ENCODE measurements at regions of chr13 and their contacts with region 1.

Region 1: GRCh38 chr13:78586706-78587105 is 16.6 kb downstream of the POU4F1 start:
- DNase-seq: peak; percentile 81
- ATAC-seq: peak; percentile 98
- H3K4me3 Mint-ChIP-seq: peak overlapping the region; percentile 74
- H3K27ac Mint-ChIP-seq: no peak overlapping the region
- H3K4me1 Mint-ChIP-seq: peaks cover 9% of the 10 kb centered on the region
- H3K27me3 Mint-ChIP-seq: peaks cover 63% of the 10 kb centered on the region
- CTCF ChIP-seq: peak; percentile 78

Region 2: GRCh38 chr13:78121459-78122348 is 465.0 kb before region 1 on chr13:
- CTCF ChIA-PET with region 1: no interaction called
- POLR2A ChIA-PET with region 1: no interaction called
- DNase-seq: peak; percentile 27
- ATAC-seq: peak; percentile 68
- H3K4me3 Mint-ChIP-seq: no peak overlapping the region
- H3K27ac Mint-ChIP-seq: no peak overlapping the region
- H3K4me1 Mint-ChIP-seq: peaks cover 41% of the 10 kb centered on the region
- H3K27me3 Mint-ChIP-seq: no peaks in the 10 kb centered on the region
- CTCF ChIP-seq: peak; percentile 79

Region 3: DNA sequence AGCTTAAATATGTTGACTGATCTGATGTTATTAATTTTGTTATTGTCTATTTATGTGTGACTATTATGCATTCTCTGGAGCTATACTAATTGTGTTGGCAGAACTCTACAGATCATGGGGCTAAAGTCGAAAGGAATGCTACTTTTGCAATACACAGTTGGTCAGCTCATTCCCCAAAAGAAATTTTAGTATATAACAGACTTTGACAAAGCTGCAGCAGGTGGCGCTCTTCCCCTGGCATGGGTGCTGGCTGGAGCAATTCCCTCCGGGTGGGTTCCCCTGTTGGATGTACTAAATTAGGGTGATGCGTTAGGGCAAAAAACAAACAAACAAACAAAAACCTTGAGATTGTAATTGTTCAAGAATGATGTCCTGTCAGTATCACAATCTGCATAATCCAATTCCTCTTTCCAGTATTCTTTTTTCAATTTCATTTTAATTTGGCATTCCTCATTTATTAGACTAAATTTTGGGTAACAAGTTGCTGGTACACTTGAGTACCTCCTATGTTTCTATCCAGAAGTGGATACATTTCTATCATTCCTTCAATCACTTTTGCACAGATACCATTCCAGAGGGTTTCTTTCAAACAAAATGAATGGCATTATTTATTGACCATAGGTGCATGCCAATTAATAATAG is 345.3 kb before region 1 on chr13:
- CTCF ChIA-PET with region 1: interaction called, 40 read pairs
- POLR2A ChIA-PET with region 1: no interaction called
- DNase-seq: peak; percentile 73
- ATAC-seq: peak; percentile 86
- H3K4me3 Mint-ChIP-seq: no peak overlapping the region
- H3K27ac Mint-ChIP-seq: no peak overlapping the region
- H3K4me1 Mint-ChIP-seq: peaks cover 16% of the 10 kb centered on the region
- H3K27me3 Mint-ChIP-seq: no peaks in the 10 kb centered on the region; the same call in 1 of the 2 replicates
- CTCF ChIP-seq: peak; percentile 78

Region 4: GRCh38 chr13:78468621-78469020 is 118.1 kb before region 1 on chr13:
- CTCF ChIA-PET with region 1: interaction called, 11 read pairs
- POLR2A ChIA-PET with region 1: no interaction called
- DNase-seq: no peak
- ATAC-seq: no peak
- H3K4me3 Mint-ChIP-seq: no peak overlapping the region
- H3K27ac Mint-ChIP-seq: no peak overlapping the region
- H3K4me1 Mint-ChIP-seq: peaks cover 7% of the 10 kb centered on the region; the same call in 1 of the 2 replicates
- H3K27me3 Mint-ChIP-seq: no peaks in the 10 kb centered on the region
- CTCF ChIP-seq: no peak

Region 5: GRCh38 chr13:78576261-78576660 is 10.4 kb before region 1 on chr13:
- CTCF ChIA-PET with region 1: interaction called, 24 read pairs
- POLR2A ChIA-PET with region 1: no interaction called
- DNase-seq: no peak
- ATAC-seq: no peak
- H3K4me3 Mint-ChIP-seq: no peak overlapping the region
- H3K27ac Mint-ChIP-seq: no peak overlapping the region
- H3K4me1 Mint-ChIP-seq: no peaks in the 10 kb centered on the region
- H3K27me3 Mint-ChIP-seq: peaks cover 3% of the 10 kb centered on the region; the same call in 1 of the 2 replicates
- CTCF ChIP-seq: no peak

Region 6: DNA sequence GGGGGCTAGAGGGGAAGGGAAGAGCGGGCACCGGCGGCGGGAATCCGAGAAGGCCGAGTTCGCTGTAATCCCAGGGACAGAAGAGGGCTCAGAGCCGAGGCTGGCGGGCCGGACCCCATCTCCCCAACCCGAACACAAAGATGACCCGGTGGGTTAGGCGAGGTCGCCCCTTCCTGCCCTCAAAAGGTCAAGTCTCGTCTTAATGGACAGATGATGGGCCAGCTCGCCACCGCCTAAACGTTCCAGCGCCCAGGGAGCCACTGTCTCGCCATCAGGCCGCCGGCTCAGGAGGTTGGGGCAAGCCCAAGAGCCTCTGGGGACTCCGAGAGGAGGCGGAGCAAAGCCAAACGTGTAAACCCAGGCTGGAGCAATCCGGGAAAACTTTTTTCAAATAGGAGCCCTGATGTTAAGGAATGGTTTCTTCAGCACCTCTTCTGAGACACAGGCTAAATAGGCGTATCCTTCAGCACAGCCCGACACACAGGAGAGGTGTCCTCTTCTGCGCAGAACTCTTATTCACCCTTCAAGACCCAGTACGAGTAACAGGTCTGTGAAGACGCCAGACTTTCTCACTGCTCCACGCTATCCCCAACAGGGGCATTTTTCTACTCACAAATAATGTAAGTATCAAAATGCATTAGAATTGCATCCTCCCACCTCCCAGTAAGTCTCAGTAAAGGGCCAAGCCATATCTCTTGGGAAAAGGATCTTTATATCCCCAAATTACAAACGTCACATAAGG is 22.9 kb after region 1 on chr13:
- CTCF ChIA-PET with region 1: interaction called, 34 read pairs
- POLR2A ChIA-PET with region 1: interaction called, 3 read pairs
- DNase-seq: peak; percentile 53
- ATAC-seq: peak; percentile 48
- H3K4me3 Mint-ChIP-seq: peak overlapping the region; percentile 73
- H3K27ac Mint-ChIP-seq: no peak overlapping the region
- H3K4me1 Mint-ChIP-seq: peaks cover 48% of the 10 kb centered on the region
- H3K27me3 Mint-ChIP-seq: peaks cover 91% of the 10 kb centered on the region
- CTCF ChIP-seq: no peak

Region 7: GRCh38 chr13:78649997-78650716 is 63.5 kb after region 1 on chr13:
- CTCF ChIA-PET with region 1: no interaction called
- POLR2A ChIA-PET with region 1: no interaction called
- DNase-seq: no peak
- ATAC-seq: no peak
- H3K4me3 Mint-ChIP-seq: no peak overlapping the region
- H3K27ac Mint-ChIP-seq: no peak overlapping the region
- H3K4me1 Mint-ChIP-seq: peaks cover 22% of the 10 kb centered on the region
- H3K27me3 Mint-ChIP-seq: peaks cover 4% of the 10 kb centered on the region; the same call in 1 of the 2 replicates
- CTCF ChIP-seq: no peak